ENCODE measurements at regions of chr19 and their contacts with region 1.

Region 1: GRCh38 chr19:38618590-38619360 is at the start of gene EIF3K:
- DNase-seq: peak; percentile 99
- H3K4me3 Mint-ChIP-seq: peak within 1 kb of the TSS; percentile 100
- H3K27ac Mint-ChIP-seq: peak within 1 kb of the TSS; percentile 91
- H3K4me1 Mint-ChIP-seq: peaks cover 45% of the 10 kb centered on the region
- H3K27me3 Mint-ChIP-seq: no peaks in the 10 kb centered on the region
- total RNA-seq, gene EIF3K: 299 to 324 TPM

Region 2: GRCh38 chr19:38315657-38316476 is 302.9 kb before region 1 on chr19 and contains the start of gene YIF1B:
- CTCF ChIA-PET with region 1: no interaction called
- intact Hi-C with region 1: loop called (anchors 5 kb)
- DNase-seq: peak; percentile 98
- H3K4me3 Mint-ChIP-seq: peak within 1 kb of the TSS; percentile 89
- H3K27ac Mint-ChIP-seq: peak within 1 kb of the TSS; percentile 92
- H3K4me1 Mint-ChIP-seq: peaks cover 50% of the 10 kb centered on the region
- H3K27me3 Mint-ChIP-seq: no peaks in the 10 kb centered on the region
- total RNA-seq, gene YIF1B: 56.0 to 61.1 TPM

Region 3: DNA sequence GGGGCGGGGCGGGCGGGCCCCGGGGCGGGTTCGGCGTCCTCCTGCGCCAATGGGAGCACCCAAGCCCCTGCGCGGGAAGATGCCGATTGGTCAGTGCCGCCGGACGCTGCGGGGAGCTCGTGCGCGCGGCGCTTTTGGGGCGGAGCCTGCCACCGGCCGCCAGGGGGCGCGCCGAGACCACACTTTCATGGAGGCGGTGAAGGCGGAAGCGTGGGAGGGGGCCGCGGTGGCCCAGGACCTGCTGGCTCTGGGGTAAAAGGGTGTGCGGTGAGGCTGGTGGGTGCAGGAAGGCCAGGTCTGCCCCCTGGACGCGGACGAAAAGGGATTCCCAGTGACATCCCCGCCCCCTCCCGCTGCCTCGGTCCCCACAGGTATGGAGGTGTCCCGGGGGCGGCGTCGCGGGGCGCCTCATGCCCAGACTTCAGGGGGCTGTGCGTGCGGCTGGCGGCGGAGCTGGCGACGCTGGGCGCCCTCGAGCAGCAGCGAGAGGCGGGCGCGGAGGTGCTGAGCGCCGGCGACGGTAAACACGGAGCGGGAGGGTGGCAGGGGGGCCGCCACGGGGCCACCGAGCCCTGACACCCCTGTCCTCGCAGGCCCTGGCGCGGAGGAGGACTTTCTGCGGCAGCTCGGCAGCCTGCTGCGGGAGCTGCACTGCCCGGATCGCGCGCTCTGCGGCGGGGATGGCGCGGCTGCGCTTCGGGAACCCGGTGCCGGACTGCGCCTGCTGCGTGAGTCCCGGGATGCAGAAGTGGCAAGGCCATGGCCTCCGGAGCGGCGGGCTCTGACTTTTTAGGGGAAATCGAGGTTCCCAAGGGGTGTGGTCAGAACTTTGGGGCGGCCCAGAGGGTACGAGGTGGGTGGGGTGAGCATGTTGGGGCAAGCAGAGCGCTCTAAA is 215.6 kb before region 1 on chr19 and contains the start of gene FAM98C:
- CTCF ChIA-PET with region 1: interaction called, 11 read pairs
- intact Hi-C with region 1: loop called (anchors 1 kb)
- DNase-seq: peak; percentile 98
- H3K4me3 Mint-ChIP-seq: peak within 1 kb of the TSS; percentile 90
- H3K27ac Mint-ChIP-seq: peak within 1 kb of the TSS; percentile 84
- H3K4me1 Mint-ChIP-seq: peaks cover 15% of the 10 kb centered on the region
- H3K27me3 Mint-ChIP-seq: no peaks in the 10 kb centered on the region
- total RNA-seq, gene FAM98C: 21.5 to 27.0 TPM

Region 4: GRCh38 chr19:38544034-38544958 is 74.5 kb before region 1 on chr19:
- CTCF ChIA-PET with region 1: interaction called, 4 read pairs
- intact Hi-C with region 1: loop called (anchors 1 kb)
- DNase-seq: peak; percentile 53
- H3K4me3 Mint-ChIP-seq: peak overlapping the region; percentile 52
- H3K27ac Mint-ChIP-seq: no peak overlapping the region
- H3K4me1 Mint-ChIP-seq: peaks cover 16% of the 10 kb centered on the region
- H3K27me3 Mint-ChIP-seq: no peaks in the 10 kb centered on the region

Region 5: DNA sequence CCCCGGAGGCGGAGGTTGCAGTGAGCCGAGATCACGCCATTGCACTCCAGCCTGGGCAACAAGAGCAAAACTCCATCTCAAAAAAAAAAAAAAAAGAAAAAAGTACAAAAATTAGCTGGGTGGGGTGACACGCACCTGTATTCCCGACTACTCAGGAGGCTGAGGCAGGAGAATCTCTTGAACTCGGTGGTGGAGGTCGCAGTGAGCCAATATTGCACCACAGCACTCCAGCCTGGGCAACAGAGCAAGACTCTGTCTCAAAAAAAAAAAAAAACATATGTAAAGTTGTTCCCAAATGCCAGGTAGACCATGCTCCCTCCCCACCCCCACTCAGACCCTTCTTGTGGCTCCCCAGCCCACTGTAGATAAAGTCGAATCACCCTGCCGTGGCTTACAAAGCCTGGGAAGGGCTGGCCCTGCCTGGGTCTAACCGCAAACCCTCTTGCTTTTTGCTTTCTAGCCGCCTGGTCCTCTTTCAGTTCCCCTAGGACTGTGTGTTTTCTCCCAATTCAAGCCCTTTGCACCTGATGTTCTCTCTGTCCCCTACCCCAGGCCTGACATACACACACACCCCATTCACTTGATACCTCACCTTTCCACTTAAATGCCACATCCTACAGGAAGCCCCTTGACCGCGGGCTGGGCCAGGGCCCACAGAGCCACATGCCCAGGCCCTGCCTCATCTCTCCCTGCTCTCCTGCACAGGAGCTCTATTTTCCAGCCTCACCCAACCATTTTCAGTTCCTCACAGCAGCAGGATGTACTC is 35.4 kb before region 1 on chr19:
- CTCF ChIA-PET with region 1: no interaction called
- intact Hi-C with region 1: no loop called
- DNase-seq: no peak
- H3K4me3 Mint-ChIP-seq: no peak overlapping the region
- H3K27ac Mint-ChIP-seq: no peak overlapping the region
- H3K4me1 Mint-ChIP-seq: no peaks in the 10 kb centered on the region
- H3K27me3 Mint-ChIP-seq: no peaks in the 10 kb centered on the region

Region 6: DNA sequence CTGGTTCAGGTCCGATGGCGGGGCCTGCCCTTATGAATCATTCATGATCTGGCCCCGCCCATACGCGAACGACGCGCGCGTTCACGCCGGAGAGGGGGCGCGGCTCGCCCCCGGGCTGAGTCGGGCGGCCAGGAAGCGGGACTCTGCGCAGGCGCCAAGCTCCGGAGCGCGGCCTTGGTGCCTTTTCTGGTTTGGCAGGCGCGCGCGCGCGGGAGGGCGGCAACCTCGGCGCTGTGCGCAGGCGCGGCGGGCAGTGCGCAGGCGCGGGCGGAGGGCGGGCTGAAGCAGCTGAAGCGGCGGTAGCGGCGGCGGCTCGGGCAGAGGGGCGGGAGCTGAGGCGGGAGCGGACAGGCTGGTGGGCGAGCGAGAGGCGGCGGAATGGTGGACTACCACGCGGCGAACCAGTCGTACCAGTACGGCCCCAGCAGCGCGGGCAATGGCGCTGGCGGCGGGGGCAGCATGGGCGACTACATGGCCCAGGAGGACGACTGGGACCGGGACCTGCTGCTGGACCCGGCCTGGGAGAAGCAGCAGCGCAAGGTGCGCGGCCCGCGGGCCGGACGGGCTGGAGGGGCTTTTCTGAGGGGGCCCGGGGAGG is 28.7 kb after region 1 on chr19 and contains the start of gene ACTN4:
- CTCF ChIA-PET with region 1: interaction called, 3 read pairs
- intact Hi-C with region 1: loop called (anchors 1 kb)
- DNase-seq: peak; percentile 99
- H3K4me3 Mint-ChIP-seq: peak within 1 kb of the TSS; percentile 96
- H3K27ac Mint-ChIP-seq: peak within 1 kb of the TSS; percentile 30
- H3K4me1 Mint-ChIP-seq: peaks cover 30% of the 10 kb centered on the region
- H3K27me3 Mint-ChIP-seq: peaks cover 29% of the 10 kb centered on the region
- total RNA-seq, gene ACTN4: 117 to 119 TPM

Region 7: GRCh38 chr19:38666663-38667511 is 48.1 kb after region 1 on chr19:
- CTCF ChIA-PET with region 1: no interaction called
- intact Hi-C with region 1: no loop called
- DNase-seq: peak; percentile 30
- H3K4me3 Mint-ChIP-seq: no peak overlapping the region
- H3K27ac Mint-ChIP-seq: no peak overlapping the region
- H3K4me1 Mint-ChIP-seq: peaks cover 52% of the 10 kb centered on the region
- H3K27me3 Mint-ChIP-seq: peaks cover 18% of the 10 kb centered on the region

Region 8: DNA sequence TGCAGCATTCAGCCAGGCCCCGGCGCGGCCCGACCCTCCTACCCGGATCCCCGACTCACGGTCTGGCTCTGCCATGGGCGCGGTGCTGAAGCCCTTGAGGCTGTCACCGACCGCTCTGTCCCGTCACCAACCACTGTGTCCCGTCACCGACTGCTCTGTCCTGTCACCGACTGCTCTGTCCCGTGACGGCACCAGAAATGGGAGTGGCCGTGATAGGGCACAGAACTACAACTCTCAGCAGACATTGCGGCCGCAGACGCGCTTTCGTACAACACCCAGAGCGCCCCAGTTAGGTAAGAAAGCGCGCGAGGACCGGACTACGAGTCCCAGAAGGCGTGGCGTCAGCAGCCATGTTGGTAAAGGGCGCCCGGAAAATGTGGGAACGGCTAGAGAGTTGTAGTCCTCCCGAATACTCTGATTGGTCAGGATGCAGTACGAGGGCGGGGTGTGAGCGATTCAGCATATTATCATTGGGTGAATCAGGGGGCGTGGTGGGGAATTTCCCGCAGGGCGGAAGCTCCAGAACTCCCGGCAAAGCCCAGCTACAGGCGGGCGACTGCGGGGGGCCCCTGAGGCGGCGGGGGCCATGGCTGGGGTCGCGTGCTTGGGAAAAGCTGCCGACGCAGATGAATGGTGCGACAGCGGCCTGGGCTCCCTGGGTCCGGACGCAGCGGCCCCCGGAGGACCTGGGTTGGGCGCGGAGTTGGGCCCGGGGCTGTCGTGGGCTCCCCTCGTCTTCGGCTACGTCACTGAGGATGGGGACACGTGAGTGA is 280.9 kb after region 1 on chr19 and contains the starts of genes NFKBIB and SIRT2:
- CTCF ChIA-PET with region 1: no interaction called
- intact Hi-C with region 1: loop called (anchors 1 kb)
- DNase-seq: peak; percentile 100
- H3K4me3 Mint-ChIP-seq: peak within 1 kb of the TSS; percentile 96
- H3K27ac Mint-ChIP-seq: peak within 1 kb of the TSS; percentile 86
- H3K4me1 Mint-ChIP-seq: peaks cover 41% of the 10 kb centered on the region
- H3K27me3 Mint-ChIP-seq: no peaks in the 10 kb centered on the region
- total RNA-seq, gene NFKBIB: 47.2 to 52.7 TPM
- total RNA-seq, gene SIRT2: 18.2 to 19.6 TPM

Measured in activated naive CD4-positive, alpha-beta T cell treated with anti-CD3 and anti-CD28 coated beads for 36 hours (primary cell).